ENCODE measurements at regions of chr10 and their contacts with region 1.

Region 1: GRCh38 chr10:114103284-114103683 is 59.6 kb downstream of the ADRB1 start:
- DNase-seq: no peak
- H3K4me3 Mint-ChIP-seq: no peak overlapping the region
- H3K27ac Mint-ChIP-seq: no peak overlapping the region
- H3K4me1 Mint-ChIP-seq: peaks cover 34% of the 10 kb centered on the region
- H3K27me3 Mint-ChIP-seq: peaks cover 43% of the 10 kb centered on the region

Region 2: DNA sequence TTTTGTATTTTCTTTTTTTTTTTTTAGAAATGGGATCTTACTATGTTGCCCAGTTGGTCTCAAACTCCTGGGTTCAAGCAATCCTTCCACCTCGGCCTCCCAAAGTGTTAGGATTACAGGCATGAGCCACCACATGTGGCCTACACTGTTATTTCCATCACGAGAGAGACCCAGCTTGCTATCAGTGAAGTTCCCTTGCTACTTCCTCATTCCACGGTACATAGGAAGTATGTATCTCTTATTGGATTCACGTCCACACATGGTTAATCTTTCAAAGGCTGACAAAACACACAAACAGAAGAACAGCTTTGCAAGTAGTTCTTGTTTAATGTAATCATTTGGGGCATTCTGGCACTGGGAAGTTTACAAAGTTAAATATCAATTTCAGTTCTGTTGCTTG is 300.3 kb before region 1 on chr10:
- CTCF ChIA-PET with region 1: interaction called, 89 read pairs
- DNase-seq: no peak
- H3K4me3 Mint-ChIP-seq: no peak overlapping the region
- H3K27ac Mint-ChIP-seq: no peak overlapping the region
- H3K4me1 Mint-ChIP-seq: peaks cover 2% of the 10 kb centered on the region
- H3K27me3 Mint-ChIP-seq: peaks cover 32% of the 10 kb centered on the region